Endothelial cell of umbilical vein (primary cell): ENCODE measurements at regions of chr1 and their contacts with region 1.

Region 1: DNA sequence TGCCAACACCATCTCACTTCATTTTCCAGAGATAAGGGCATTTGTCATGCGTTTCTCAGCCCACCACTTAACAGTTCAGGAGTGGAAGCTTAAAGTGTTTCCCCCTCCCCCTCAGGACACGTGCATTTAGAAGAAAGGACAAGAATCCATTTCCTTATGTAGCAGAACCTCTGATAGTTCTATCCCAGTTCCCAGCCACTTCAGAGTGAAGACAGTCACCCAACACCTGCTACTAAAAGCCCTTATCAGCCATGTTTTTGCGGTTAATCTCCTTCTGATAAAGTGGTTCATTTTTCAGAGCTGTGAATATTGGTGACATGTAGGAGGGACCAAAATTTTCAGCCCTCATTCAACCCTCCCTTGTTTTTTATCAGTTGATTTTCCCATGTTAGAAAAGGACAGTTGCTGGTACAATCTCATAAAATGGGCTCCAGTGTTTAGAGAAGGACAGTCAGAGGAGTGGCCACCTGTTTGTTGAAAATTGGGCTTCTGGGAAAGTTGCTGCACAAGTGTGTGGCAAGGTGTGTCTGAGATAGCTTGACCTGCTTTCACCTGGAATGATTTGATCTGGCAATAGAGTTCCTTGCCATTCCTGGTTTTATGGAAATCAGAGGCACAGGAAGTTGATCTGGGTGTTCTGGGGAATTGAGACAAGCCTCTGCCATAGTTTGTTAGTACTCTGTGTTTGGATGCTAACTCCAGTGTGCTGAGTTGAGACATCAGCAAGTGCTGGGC is 114.0 kb downstream of the PPP1R12B start:
- DNase-seq: no peak
- H3K4me3 ChIP-seq: no peak overlapping the region
- H3K27ac ChIP-seq: no peak overlapping the region
- H3K4me1 ChIP-seq: peaks cover 15% of the 10 kb centered on the region
- H3K27me3 ChIP-seq: no peaks in the 10 kb centered on the region
- CTCF ChIP-seq: no peak
- POLR2A ChIP-seq: no peak

Region 2: DNA sequence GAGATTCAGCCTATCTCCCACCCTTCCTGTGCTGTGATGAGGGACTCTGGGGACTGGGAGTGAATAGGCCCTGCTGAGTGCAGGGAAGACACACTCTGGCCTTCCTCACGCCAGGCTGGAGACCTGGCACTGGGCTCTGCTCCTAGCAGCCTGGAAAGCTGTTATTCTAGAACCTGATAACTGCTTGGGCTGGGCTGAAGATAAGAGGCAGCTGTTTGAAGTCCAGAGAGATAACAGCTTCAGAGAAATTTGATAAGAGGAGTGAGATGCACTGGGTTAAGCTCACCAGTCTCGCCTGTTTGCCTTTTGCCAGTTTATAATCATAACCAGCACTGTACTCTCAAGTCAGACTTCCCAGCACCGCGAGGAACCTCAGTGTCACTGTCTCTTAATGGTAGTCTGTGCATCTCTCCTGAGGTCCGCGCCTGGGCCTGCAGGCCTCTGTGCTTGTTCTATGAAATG is 386.4 kb before region 1 on chr1:
- CTCF ChIA-PET with region 1: no interaction called
- POLR2A ChIA-PET with region 1: no interaction called
- dilution Hi-C with region 1: no loop called
- intact Hi-C with region 1: no loop called
- DNase-seq: no peak
- H3K4me3 ChIP-seq: no peak overlapping the region
- H3K27ac ChIP-seq: no peak overlapping the region
- H3K4me1 ChIP-seq: no peaks in the 10 kb centered on the region
- H3K27me3 ChIP-seq: no peaks in the 10 kb centered on the region
- CTCF ChIP-seq: no peak
- POLR2A ChIP-seq: no peak

Region 3: DNA sequence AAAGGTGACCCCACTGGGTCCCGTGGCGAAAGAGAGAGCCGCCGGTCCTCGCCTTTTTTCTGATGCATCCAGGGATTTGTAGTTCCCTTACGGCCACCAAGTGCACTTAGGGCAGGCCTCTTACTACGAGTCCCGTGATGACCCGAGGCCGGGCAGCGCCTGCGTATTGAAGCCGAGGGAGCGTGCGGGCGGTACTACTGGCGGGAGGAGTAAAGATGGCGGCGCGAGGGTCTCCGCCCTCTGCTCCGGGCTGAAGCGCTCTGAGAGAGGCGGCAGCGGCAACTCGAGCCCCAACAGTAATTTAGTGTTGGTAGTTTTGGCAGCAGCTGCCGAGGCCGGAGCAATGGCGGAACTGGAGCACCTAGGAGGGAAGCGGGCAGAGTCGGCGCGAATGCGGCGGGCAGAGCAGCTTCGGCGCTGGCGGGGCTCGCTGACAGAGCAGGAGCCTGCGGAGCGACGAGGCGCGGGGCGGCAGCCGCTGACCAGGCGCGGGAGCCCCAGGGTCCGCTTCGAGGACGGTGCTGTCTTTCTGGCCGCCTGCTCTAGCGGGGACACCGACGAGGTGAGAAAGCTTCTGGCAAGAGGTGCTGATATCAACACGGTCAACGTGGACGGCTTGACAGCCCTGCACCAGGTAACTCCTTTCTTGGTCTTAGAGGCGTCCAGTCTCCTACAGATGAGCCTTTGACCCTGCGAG is 113.9 kb before region 1 on chr1 and contains the start of gene PPP1R12B:
- CTCF ChIA-PET with region 1: interaction called, 3 read pairs
- POLR2A ChIA-PET with region 1: no interaction called
- dilution Hi-C with region 1: no loop called
- intact Hi-C with region 1: loop called (anchors 5 kb)
- DNase-seq: peak; percentile 99
- H3K4me3 ChIP-seq: peak within 1 kb of the TSS; percentile 44 to 75 (median 55)
- H3K27ac ChIP-seq: peak within 1 kb of the TSS; percentile 52
- H3K4me1 ChIP-seq: peaks cover 7% of the 10 kb centered on the region
- H3K27me3 ChIP-seq: no peaks in the 10 kb centered on the region
- CTCF ChIP-seq: no peak
- POLR2A ChIP-seq: peak; percentile 71
- total RNA-seq, gene PPP1R12B: 11.5 and 11.6 TPM in 2 replicates

Region 4: DNA sequence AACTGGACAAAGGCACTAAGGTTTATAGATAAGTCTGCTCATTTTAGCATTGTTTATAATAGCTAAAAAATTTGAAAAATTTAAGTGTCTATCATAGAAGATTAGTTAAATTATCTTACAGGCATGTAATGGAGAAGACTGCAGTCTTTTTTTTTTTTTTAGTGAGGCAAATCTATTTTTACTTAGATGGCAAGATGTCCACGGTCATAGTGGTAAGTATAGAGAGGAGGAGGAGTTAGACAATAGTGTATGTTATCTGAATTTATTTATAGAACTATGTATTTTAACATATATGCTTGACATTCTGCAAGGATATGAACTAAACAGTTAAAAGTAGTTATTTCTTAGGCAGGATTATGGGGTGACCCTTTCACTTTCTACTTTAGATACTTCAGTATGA is 98.7 kb after region 1 on chr1:
- CTCF ChIA-PET with region 1: no interaction called
- POLR2A ChIA-PET with region 1: no interaction called
- dilution Hi-C with region 1: no loop called
- intact Hi-C with region 1: no loop called
- DNase-seq: no peak
- H3K4me3 ChIP-seq: no peak overlapping the region
- H3K27ac ChIP-seq: no peak overlapping the region
- H3K4me1 ChIP-seq: no peaks in the 10 kb centered on the region
- H3K27me3 ChIP-seq: no peaks in the 10 kb centered on the region
- CTCF ChIP-seq: no peak
- POLR2A ChIP-seq: no peak

Region 5: GRCh38 chr1:202571347-202572339 is 109.1 kb after region 1 on chr1:
- CTCF ChIA-PET with region 1: interaction called, 7 read pairs
- POLR2A ChIA-PET with region 1: no interaction called
- dilution Hi-C with region 1: no loop called
- intact Hi-C with region 1: loop called (anchors 1 kb)
- DNase-seq: peak; percentile 54
- H3K4me3 ChIP-seq: no peak overlapping the region
- H3K27ac ChIP-seq: no peak overlapping the region
- H3K4me1 ChIP-seq: peaks cover 4% of the 10 kb centered on the region
- H3K27me3 ChIP-seq: no peaks in the 10 kb centered on the region
- CTCF ChIP-seq: peak; percentile 78 to 82
- POLR2A ChIP-seq: no peak

Region 6: DNA sequence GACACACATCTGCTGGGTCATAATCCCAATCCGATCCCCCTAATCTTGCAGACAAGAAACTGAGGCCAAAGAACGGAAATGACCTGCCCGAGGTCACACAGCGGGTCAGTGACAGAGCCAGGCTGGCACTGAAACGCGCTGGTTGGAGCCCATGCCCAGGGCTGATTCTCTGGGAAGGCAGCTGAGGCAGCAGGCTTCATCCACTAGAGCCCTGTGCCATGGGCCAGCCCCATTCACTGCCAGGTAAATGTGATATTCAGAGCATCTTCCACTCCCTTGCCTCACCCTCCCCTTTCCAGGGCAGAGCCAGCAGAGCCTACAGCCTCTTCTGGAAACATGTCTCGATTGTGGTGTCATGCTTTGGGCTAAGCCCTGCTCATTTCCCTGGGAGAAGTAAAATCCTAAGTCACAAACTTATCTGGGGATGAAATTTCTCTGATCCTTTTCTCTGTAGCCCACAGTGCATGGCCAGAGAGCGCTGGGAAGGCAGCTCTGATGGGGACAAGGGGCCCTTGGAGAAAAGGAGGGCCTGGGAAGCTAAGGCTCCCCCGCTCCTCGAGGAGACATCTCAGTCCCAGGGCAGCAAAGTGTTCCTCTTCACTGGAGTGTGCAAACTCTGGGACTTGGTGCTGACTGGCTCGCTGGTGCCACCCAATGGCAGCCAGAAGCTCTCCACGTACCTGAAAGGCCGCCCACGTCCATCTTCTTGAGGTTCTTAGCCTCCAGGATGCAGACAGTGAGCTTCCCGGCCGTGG is 137.3 kb after region 1 on chr1:
- CTCF ChIA-PET with region 1: interaction called, 34 read pairs
- POLR2A ChIA-PET with region 1: no interaction called
- dilution Hi-C with region 1: no loop called
- intact Hi-C with region 1: loop called (anchors 1 kb)
- DNase-seq: peak; percentile 72
- H3K4me3 ChIP-seq: no peak overlapping the region
- H3K27ac ChIP-seq: no peak overlapping the region
- H3K4me1 ChIP-seq: no peaks in the 10 kb centered on the region
- H3K27me3 ChIP-seq: no peaks in the 10 kb centered on the region
- CTCF ChIP-seq: peak; percentile 87 to 93
- POLR2A ChIP-seq: no peak

Region 7: GRCh38 chr1:202615501-202616354 is 153.2 kb after region 1 on chr1:
- CTCF ChIA-PET with region 1: interaction called, 10 read pairs
- POLR2A ChIA-PET with region 1: no interaction called
- dilution Hi-C with region 1: no loop called
- intact Hi-C with region 1: no loop called
- DNase-seq: peak; percentile 46
- H3K4me3 ChIP-seq: no peak overlapping the region
- H3K27ac ChIP-seq: peak overlapping the region; percentile 55
- H3K4me1 ChIP-seq: peaks cover 17% of the 10 kb centered on the region
- H3K27me3 ChIP-seq: no peaks in the 10 kb centered on the region
- CTCF ChIP-seq: no peak
- POLR2A ChIP-seq: no peak

Region 8: GRCh38 chr1:202625416-202626360 is 163.2 kb after region 1 on chr1:
- CTCF ChIA-PET with region 1: interaction called, 15 read pairs
- POLR2A ChIA-PET with region 1: no interaction called
- dilution Hi-C with region 1: no loop called
- intact Hi-C with region 1: loop called (anchors 1 kb)
- DNase-seq: peak; percentile 41
- H3K4me3 ChIP-seq: no peak overlapping the region
- H3K27ac ChIP-seq: no peak overlapping the region
- H3K4me1 ChIP-seq: no peaks in the 10 kb centered on the region
- H3K27me3 ChIP-seq: no peaks in the 10 kb centered on the region
- CTCF ChIP-seq: peak; percentile 46 to 91
- POLR2A ChIP-seq: no peak

Region 9: GRCh38 chr1:202692959-202693555 is 230.5 kb after region 1 on chr1:
- CTCF ChIA-PET with region 1: no interaction called
- POLR2A ChIA-PET with region 1: no interaction called
- dilution Hi-C with region 1: no loop called
- intact Hi-C with region 1: no loop called
- DNase-seq: peak; percentile 55
- H3K4me3 ChIP-seq: no peak overlapping the region
- H3K27ac ChIP-seq: no peak overlapping the region
- H3K4me1 ChIP-seq: no peaks in the 10 kb centered on the region
- H3K27me3 ChIP-seq: peaks cover 0 to under 1% of the 10 kb centered on the region in 2 experiments
- CTCF ChIP-seq: peak in 1 of 2 donors; percentile 12
- POLR2A ChIP-seq: no peak

Region 10: GRCh38 chr1:202710070-202711045 is 247.8 kb after region 1 on chr1 and contains the start of gene SYT2:
- CTCF ChIA-PET with region 1: interaction called, 18 read pairs
- POLR2A ChIA-PET with region 1: no interaction called
- dilution Hi-C with region 1: no loop called
- intact Hi-C with region 1: no loop called
- DNase-seq: peak; percentile 21
- H3K4me3 ChIP-seq: peak within 1 kb of the TSS in 1 of 3 experiments; percentile 13
- H3K27ac ChIP-seq: no peak within 1 kb of the TSS
- H3K4me1 ChIP-seq: peaks cover 20% of the 10 kb centered on the region
- H3K27me3 ChIP-seq: peaks cover 41 to 55% of the 10 kb centered on the region in 2 experiments
- CTCF ChIP-seq: no peak
- POLR2A ChIP-seq: no peak
- total RNA-seq, gene SYT2: not detected in 2 replicates